ENCODE measurements at regions of chr4 and their contacts with region 1.

Region 1: DNA sequence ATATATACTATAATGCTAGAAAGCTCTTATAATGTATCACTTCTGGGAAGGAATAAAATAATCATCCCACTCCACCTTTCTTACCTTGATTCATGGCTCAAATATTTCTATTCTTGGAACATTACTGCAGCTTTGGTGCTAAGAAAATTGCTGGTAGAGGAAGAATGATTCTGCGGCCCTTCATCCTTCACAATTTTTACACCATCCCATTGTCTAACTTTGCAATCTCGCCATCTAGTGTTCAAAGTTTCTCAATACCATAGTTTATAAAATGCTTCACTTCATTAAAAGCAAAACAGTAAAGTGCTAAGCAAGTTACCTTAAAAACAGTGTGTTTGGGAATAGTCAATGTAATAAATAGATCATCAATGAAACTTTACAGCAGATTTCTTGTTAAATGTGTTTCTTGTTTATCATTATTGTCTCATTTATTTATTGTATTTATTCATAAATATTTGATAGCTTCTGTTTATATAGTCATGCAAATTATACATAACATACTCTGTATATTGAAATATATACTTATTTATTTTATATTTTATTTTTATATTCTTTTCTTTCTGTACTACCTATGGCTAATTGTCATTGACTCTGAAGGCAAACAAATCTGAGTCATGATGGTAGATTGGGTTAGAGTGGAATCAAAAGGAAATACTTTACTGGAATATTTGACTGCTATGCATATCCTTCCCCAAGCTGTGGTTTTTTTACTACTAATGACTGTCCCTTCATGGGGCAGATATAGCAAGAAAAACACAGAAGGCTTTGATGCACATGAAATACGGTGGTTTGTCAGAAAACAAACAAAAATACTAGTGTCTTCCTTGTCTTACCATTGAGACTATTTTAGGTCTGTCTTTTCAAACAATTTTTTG is 390.7 kb downstream of the MAPK10 start:
- DNase-seq: no peak
- H3K4me3 ChIP-seq: no peak overlapping the region
- CTCF ChIP-seq: peak; percentile 30

Region 2: DNA sequence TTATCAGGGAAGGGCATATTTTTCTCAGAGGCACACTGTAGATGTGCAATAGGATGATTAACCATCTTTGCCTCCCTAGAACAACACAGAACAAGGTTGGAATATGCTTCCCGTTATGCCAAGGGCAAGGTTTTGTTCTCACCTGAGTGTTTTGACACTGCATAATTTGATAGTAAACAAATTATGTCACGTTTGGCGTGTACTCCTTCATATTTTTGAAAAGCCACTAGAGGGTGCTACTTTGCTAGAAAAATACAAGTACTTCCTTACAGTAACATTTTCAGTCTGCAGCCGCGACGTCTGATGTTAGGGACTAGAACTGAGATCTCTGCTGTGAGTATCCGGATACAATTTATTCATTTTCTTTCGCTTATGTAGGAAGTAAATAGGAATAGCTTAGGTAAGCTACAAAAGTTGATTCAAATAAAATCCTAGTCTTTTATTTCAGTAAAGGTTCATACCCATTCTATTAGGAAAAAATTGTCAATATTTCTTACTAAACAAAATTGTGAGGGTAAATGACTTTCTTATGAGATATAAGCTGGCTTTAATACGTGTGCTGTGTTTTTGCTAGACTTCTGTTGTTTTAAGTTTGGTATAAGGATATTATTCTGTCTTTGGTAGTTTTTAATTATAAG is 821.6 kb before region 1 on chr4:
- CTCF ChIA-PET with region 1: interaction called, 14 read pairs
- POLR2A ChIA-PET with region 1: no interaction called
- DNase-seq: peak; percentile 10
- H3K4me3 ChIP-seq: no peak overlapping the region
- CTCF ChIP-seq: peak; percentile 42

Region 3: GRCh38 chr4:85756938-85757337 is 212.2 kb before region 1 on chr4:
- CTCF ChIA-PET with region 1: interaction called, 45 read pairs
- POLR2A ChIA-PET with region 1: no interaction called
- DNase-seq: no peak
- H3K4me3 ChIP-seq: no peak overlapping the region
- CTCF ChIP-seq: peak; percentile 51

Region 4: GRCh38 chr4:85761803-85762528 is 207.2 kb before region 1 on chr4:
- CTCF ChIA-PET with region 1: interaction called, 13 read pairs
- POLR2A ChIA-PET with region 1: no interaction called
- DNase-seq: no peak
- H3K4me3 ChIP-seq: no peak overlapping the region
- CTCF ChIP-seq: no peak

Region 5: DNA sequence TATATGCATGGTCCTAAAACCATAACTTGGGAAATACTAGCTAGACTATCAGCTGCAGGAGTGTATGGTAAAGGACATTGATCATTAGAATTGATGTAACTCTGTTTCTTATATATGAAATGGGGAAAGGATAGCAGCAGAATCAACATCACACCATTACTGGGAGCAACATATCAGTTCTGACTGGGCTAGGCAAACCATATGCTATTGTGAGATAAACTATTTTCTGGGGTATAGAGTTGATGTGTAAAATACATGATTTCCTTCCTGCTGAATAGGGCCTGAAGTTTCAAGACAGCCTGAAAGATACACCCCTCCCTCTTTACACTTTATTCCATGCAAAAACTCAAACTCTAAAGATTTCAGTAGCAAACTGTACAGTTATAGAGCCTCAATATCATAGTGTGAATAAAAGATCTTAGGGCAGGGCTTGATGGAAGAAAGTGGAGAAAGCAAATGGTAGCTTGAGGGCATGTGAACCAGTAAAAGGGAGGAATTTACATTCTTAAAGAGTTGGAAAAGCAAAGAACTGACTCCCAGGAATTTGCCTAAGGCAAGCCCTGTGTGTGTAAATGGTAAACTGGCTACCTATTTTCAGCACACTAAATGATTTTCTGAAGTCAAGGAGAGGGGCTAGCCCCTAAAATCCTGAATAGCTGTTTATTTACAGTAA is 13.4 kb before region 1 on chr4:
- CTCF ChIA-PET with region 1: interaction called, 26 read pairs
- POLR2A ChIA-PET with region 1: no interaction called
- DNase-seq: no peak
- H3K4me3 ChIP-seq: no peak overlapping the region
- CTCF ChIP-seq: no peak

Region 6: DNA sequence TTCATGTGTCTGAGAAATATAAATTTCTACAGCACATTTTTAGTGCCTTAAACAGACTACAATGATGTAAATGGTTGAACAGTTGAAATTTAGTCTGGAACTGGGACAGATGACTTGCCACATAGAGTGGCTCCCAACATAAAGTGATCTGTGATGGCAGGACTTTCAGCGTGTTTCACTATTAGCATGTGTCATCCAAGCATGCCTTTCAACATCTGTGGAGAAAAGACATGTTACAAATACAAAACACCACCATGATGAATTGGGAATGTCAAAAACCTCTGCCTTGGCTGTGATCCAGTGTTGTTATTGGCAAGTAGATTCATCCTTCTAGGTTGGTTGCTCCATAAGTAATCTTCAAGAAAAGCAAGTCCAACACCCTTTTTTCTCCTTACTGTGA is 41.9 kb after region 1 on chr4:
- CTCF ChIA-PET with region 1: no interaction called
- POLR2A ChIA-PET with region 1: no interaction called
- DNase-seq: peak; percentile 94
- H3K4me3 ChIP-seq: no peak overlapping the region
- CTCF ChIP-seq: no peak